Activated CD8-positive, alpha-beta T cell treated with anti-CD3 and anti-CD28 coated beads for 36 hours (primary cell): ENCODE measurements at regions of chr16 and their contacts with region 1.

Region 1: GRCh38 chr16:30355144-30355894 is at the start of gene CD2BP2:
- DNase-seq: peak; percentile 93
- ATAC-seq: peak; percentile 82
- H3K4me3 Mint-ChIP-seq: peak within 1 kb of the TSS; percentile 97
- H3K27ac Mint-ChIP-seq: peak within 1 kb of the TSS; percentile 93
- H3K4me1 Mint-ChIP-seq: peaks cover 50% of the 10 kb centered on the region
- H3K27me3 Mint-ChIP-seq: no peaks in the 10 kb centered on the region
- CTCF ChIP-seq: no peak
- total RNA-seq, gene CD2BP2: 43.8 to 44.5 TPM

Region 2: DNA sequence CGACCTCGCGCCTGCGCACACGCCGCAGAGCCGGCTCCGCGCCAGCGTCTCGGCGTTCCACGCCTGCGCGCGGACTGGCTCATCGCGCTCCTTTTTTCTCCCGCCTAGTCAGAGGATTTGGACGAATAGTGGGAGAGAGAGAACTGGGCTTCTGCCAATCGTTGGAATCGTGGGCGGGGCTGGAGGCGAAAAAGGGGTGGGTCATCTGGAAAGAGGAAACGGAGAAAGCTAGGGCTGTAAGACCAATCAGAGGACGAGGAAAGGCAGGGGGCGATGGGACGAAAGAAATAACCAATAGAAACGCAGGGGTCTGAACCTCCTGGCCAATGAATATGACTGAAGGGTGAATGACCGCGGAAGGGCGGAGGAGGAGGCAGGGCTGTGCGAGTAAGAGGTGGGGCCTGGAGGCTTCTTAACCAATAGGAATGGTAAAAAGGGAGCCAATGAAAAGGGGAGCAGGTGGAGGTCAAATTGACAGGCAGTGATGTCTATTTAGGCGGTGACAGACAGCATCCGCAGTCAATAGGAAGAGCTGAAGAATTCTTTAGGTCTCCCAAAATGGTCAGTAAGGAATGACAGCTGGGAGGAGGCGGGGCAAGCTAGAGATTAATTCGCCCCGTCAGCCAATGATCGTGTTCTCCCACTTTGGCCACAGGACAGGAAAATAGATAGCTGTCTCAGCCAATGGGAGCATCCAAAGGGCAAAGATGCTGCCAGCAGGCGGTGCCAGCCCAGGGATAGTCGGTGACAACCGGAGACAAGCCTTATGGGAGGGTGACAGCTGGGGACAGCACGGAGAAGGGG is 15.3 kb after region 1 on chr16 and contains the start of gene TBC1D10B:
- CTCF ChIA-PET with region 1: interaction called, 6 read pairs
- POLR2A ChIA-PET with region 1: interaction called, 73 read pairs
- intact Hi-C with region 1: no loop called
- DNase-seq: peak; percentile 99
- ATAC-seq: peak; percentile 87
- H3K4me3 Mint-ChIP-seq: peak within 1 kb of the TSS; percentile 95
- H3K27ac Mint-ChIP-seq: peak within 1 kb of the TSS; percentile 92
- H3K4me1 Mint-ChIP-seq: peaks cover 35% of the 10 kb centered on the region
- H3K27me3 Mint-ChIP-seq: no peaks in the 10 kb centered on the region
- CTCF ChIP-seq: no peak
- total RNA-seq, gene TBC1D10B: 39.7 to 41.3 TPM

Region 3: DNA sequence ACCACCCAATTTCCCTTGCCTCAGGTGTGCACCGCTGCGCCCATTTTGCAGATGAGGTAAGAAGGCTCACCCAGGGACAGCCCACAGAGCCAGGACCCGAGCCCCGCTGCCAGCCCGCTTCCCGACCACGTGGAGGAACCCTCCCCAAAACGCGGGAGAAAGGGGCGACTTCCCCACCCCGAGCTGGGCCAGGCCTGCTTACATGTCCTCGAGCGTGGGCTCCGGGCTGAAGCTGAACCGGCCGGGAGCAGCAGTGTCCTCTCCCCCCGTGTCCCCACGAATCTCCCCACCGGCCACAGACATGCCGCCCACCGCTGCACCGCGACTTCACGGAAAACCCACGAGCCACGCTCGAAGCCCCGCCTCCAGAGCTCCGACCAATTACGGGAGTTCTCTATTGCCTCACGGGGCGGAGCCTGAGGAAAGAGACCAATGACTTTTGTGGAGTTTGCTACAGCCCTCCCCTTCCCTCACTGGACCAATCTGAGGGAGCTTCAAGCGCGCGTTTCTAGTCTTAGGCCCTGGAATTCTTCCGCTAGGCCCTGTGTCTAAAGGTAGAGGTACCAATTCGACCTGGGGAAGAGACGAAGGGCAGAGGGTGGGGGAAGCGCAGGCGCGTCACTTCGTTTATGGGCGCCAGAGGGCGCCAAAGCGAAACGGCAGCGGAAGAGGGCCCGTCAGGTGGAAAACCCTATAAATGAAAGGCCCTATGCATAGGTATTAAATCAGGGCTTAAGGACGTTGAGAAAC is 74.5 kb after region 1 on chr16 and contains the start of gene DCTPP1:
- CTCF ChIA-PET with region 1: no interaction called
- POLR2A ChIA-PET with region 1: no interaction called
- intact Hi-C with region 1: no loop called
- DNase-seq: peak; percentile 98
- ATAC-seq: peak; percentile 97
- H3K4me3 Mint-ChIP-seq: no peak within 1 kb of the TSS
- H3K27ac Mint-ChIP-seq: no peak within 1 kb of the TSS
- H3K4me1 Mint-ChIP-seq: peaks cover 34% of the 10 kb centered on the region
- H3K27me3 Mint-ChIP-seq: no peaks in the 10 kb centered on the region
- CTCF ChIP-seq: peak; percentile 69
- total RNA-seq, gene DCTPP1: 98.4 to 105 TPM

Region 4: GRCh38 chr16:30482366-30482765 is 127.0 kb after region 1 on chr16:
- CTCF ChIA-PET with region 1: no interaction called
- POLR2A ChIA-PET with region 1: no interaction called
- intact Hi-C with region 1: no loop called
- DNase-seq: peak; percentile 35
- ATAC-seq: peak; percentile 76
- H3K4me3 Mint-ChIP-seq: no peak overlapping the region
- H3K27ac Mint-ChIP-seq: peak overlapping the region; percentile 75
- H3K4me1 Mint-ChIP-seq: peaks cover 48% of the 10 kb centered on the region
- H3K27me3 Mint-ChIP-seq: no peaks in the 10 kb centered on the region
- CTCF ChIP-seq: peak; percentile 32